ENCODE measurements at regions of chr14 and their contacts with region 1.

Region 1: GRCh38 chr14:68682166-68683103 is 110.4 kb downstream of the ZFP36L1 start:
- DNase-seq: peak; percentile 94
- H3K4me3 ChIP-seq: no peak overlapping the region
- H3K27me3 ChIP-seq: no peaks in the 10 kb centered on the region
- CTCF ChIP-seq: no peak

Region 2: DNA sequence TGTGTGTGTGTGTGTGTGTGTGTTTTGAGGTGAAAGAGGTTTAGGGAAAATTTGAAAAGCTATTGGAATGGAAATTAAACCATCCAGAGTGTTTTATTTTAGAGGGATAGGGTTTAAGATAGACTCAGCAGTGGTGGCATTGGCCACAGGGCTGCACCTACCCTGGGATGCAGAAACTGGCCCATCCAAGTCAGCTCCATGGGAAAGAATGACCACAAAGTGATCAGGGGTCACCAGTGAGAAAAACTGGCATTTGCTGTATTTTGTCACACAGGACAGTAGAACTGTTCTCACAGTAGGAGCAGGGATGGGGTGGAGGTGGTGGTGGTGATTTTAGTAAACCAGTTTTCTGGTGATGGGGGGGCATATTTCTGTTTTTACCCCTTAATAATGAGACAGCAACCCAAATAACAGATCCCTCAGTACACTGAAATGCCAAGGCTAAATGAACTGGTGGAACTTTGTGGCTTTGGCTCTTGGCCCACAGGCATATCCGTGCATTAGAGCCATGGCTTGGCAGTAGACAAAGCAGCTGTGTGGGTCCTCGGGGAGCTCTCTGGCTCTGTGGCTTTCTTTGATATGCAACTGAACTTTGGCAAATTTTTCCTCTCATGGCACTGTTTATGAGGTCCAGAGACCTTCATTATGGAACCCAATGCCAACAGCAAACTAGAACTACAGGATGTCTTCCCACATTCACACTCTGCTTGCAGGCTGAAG is 237.8 kb before region 1 on chr14:
- CTCF ChIA-PET with region 1: no interaction called
- POLR2A ChIA-PET with region 1: interaction called, 15 read pairs
- DNase-seq: no peak
- H3K4me3 ChIP-seq: no peak overlapping the region
- H3K27me3 ChIP-seq: no peaks in the 10 kb centered on the region
- CTCF ChIP-seq: no peak

Region 3: GRCh38 chr14:68553311-68553710 is 129.1 kb before region 1 on chr14:
- CTCF ChIA-PET with region 1: no interaction called
- POLR2A ChIA-PET with region 1: interaction called, 10 read pairs
- DNase-seq: no peak
- H3K4me3 ChIP-seq: no peak overlapping the region
- H3K27me3 ChIP-seq: no peaks in the 10 kb centered on the region
- CTCF ChIP-seq: no peak

Region 4: DNA sequence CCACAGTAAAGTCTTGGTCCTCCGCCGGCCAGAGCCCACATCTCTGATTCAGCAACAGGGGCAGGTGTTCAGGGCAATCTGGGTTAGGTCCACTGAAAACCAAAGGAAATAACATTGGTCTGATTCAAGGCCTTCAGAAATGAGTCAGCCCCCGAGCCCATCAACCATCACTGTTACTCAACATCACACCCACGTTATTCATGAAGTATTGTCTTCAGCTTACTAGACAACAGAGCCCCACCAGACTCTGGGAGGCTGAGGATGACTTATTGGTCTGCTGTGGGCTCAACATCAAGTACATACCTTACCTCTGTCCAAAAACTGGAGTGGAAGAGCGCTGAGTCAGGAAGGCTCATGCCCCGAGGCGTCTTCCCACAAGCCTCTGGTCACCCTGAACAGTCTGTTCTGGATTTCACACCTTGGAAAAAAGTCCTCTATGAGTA is 12.9 kb after region 1 on chr14:
- CTCF ChIA-PET with region 1: interaction called, 3 read pairs
- POLR2A ChIA-PET with region 1: interaction called, 11 read pairs
- DNase-seq: peak; percentile 99
- H3K4me3 ChIP-seq: no peak overlapping the region
- H3K27me3 ChIP-seq: no peaks in the 10 kb centered on the region
- CTCF ChIP-seq: no peak

Region 5: DNA sequence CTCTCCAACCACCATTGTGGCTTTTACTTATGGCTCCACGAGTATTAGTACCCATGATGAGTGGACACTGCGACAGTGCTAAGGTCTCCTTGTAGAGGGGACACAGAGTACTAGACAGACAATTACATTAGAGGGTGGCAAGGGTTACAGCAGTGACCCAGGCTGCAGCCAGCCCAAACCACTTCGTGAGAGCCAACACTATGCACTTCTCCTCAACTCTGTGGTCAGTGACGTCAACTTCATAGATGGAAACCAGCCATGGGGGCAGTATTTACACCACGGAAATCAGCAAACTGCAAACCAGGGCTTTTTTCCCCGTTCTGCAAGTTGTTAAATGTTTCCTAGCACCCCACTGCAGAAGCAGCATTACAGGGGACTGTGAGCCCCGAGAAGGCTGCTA is 172.0 kb after region 1 on chr14:
- CTCF ChIA-PET with region 1: no interaction called
- POLR2A ChIA-PET with region 1: no interaction called
- DNase-seq: no peak
- H3K4me3 ChIP-seq: no peak overlapping the region
- H3K27me3 ChIP-seq: no peaks in the 10 kb centered on the region
- CTCF ChIP-seq: no peak